ENCODE measurements at regions of chr3 and their contacts with region 1.

Region 1: DNA sequence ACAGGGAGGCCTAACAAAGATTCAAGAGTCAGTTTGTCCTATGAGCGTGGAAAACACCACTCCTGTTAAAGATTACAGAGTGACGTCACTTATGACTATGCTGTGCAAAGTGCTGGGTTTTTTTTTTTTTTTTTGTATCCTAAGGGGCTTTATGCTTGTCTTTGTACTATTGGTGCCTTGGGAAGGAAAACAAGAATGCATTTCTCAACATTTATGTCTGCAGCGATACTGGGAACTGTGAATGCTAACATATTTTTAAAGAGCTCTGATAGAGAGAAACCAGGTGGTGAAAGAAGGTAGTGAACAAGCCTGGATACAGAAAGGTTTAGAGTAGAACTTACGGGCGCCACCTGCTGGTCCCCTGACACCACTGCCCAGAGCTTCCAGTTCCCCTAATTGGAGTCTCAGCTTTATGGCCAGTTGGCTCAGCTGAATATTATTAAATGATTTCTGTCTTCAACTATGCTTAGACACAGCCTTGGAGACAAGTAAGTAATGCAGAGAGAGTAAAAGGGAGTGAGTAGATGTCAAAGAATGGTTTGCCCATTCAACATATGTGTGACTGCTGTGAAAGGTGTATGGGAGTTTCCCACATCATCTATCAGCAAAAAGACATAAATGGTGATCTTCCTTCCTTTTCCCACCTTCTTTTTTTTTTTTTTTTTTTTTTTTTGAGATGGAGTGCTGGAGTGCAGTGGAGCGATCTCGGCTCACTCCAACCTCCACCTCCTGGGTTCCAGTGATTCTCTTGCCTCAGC is 807.9 kb upstream of the CFAP20DC start:
- DNase-seq: peak; percentile 83
- H3K4me3 ChIP-seq: no peak overlapping the region
- H3K27ac ChIP-seq: no peak overlapping the region
- H3K4me1 ChIP-seq: no peaks in the 10 kb centered on the region
- H3K27me3 ChIP-seq: no peaks in the 10 kb centered on the region
- CTCF ChIP-seq: peak; percentile 44 to 86 (median 80)
- EP300 ChIP-seq: no peak
- POLR2A ChIP-seq: no peak

Region 2: GRCh38 chr3:58640700-58641372 is 1216.9 kb before region 1 on chr3:
- intact Hi-C with region 1: loop called (anchors 10 kb)
- DNase-seq: peak; percentile 84
- H3K4me3 ChIP-seq: no peak overlapping the region
- H3K27ac ChIP-seq: no peak overlapping the region
- H3K4me1 ChIP-seq: peaks cover 0 to 8% (median 0%) of the 10 kb centered on the region in 4 donors
- H3K27me3 ChIP-seq: no peaks in the 10 kb centered on the region
- CTCF ChIP-seq: peak; percentile 59 to 76 (median 68)
- EP300 ChIP-seq: no peak
- POLR2A ChIP-seq: no peak

Region 3: GRCh38 chr3:59212128-59212779 is 645.5 kb before region 1 on chr3:
- intact Hi-C with region 1: loop called (anchors 5 kb)
- DNase-seq: no peak
- H3K4me3 ChIP-seq: no peak overlapping the region
- H3K27ac ChIP-seq: no peak overlapping the region
- H3K4me1 ChIP-seq: no peaks in the 10 kb centered on the region
- H3K27me3 ChIP-seq: no peaks in the 10 kb centered on the region
- CTCF ChIP-seq: peak in 3 of 4 experiments; percentile 33 to 63 (median 57)
- EP300 ChIP-seq: no peak
- POLR2A ChIP-seq: no peak

Region 4: DNA sequence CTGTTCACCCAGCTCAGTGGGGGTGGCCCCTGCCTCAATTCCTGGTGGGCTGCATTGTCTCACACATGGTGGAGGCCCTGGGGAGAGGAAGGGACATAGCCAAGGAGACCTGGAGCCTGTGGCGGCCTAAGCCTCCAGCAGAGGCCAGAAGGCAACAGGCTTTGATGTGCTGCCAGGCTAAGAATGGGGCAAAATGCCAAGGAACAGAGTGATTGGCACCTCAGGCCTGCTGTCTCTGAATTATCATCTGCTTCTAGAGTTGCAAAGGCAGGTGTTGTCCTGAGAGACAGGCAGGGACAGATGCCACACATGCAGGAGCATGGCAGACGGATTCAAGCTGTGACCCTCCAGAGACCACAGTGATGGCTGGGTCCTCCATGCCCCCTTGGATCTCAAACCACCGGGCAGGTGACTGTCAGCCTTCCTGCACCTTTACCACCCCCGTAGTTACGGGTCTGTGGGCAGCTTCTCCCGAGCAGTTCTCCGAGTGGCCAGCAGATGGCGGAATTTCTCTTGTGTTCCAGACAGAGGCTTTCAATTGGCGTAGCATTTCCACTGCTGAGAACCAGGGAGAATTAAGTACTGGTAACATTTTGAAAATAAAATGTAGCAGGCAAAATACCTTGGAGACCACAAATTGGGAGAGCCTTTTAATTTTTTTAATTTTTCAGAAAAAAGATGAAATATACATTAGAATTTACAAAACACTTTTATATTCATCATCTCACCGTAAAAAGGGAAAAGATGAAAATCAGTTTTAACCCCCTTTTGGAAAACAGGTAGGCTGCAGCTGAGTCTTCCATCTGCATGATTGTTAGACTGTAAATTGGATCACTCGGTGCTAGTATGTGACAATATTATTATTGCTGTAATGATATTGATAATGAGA is 282.4 kb before region 1 on chr3:
- intact Hi-C with region 1: loop called (anchors 2 kb)
- DNase-seq: peak; percentile 89
- H3K4me3 ChIP-seq: no peak overlapping the region
- H3K27ac ChIP-seq: no peak overlapping the region
- H3K4me1 ChIP-seq: peaks cover 0 to 21% (median 16%) of the 10 kb centered on the region in 4 donors
- H3K27me3 ChIP-seq: no peaks in the 10 kb centered on the region
- CTCF ChIP-seq: peak; percentile 65 to 93 (median 89)
- EP300 ChIP-seq: no peak
- POLR2A ChIP-seq: no peak